Activated B cell treated with CpG ODN at 0.5 μM for 24 hours (primary cell): ENCODE measurements at regions of chr5 and their contacts with region 1.

Region 1: GRCh38 chr5:140540227-140540626 is 7.2 kb upstream of the EIF4EBP3 start:
- DNase-seq: no peak
- ATAC-seq: no peak
- H3K4me3 Mint-ChIP-seq: no peak overlapping the region
- H3K27ac Mint-ChIP-seq: no peak overlapping the region
- H3K4me1 Mint-ChIP-seq: peaks cover 2% of the 10 kb centered on the region
- H3K27me3 Mint-ChIP-seq: no peaks in the 10 kb centered on the region
- CTCF ChIP-seq: no peak

Region 2: DNA sequence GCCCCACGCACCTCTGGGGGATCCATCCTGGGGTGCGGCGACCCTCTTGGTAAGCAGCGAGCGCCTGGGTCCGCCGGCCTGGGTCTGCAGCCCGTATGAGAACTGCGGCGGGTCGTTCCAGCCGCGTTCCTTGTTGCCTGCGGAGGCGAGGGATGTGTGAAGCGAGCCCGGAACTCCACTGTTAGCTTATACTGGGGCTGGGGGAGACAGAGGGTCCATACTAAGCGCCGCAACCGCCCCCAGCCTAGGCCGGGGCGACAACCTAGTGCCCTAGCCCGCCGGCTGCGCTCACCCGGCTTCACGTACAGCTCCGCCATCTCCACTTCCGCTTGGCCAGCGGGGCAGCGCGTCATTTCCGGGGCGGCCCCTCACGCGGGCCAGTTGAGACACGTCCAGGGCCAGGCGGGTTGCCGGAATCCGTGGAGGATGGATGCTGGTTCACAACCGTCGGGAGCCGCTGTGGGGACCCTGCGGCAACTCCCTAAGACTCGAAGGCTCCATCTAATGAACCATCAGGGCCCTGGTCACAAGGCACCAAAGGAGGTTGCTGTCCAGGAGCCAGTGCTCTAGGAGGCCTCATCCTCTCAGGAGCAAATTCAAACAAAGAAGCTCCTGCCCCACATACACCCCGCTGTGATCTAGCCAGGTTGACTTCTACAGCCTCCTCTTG is 17.0 kb after region 1 on chr5 and contains the start of gene SRA1:
- CTCF ChIA-PET with region 1: interaction called, 3 read pairs
- POLR2A ChIA-PET with region 1: interaction called, 10 read pairs
- intact Hi-C with region 1: no loop called
- DNase-seq: peak; percentile 88
- ATAC-seq: peak; percentile 97
- H3K4me3 Mint-ChIP-seq: peak within 1 kb of the TSS; percentile 93
- H3K27ac Mint-ChIP-seq: peak within 1 kb of the TSS; percentile 89
- H3K4me1 Mint-ChIP-seq: peaks cover 55% of the 10 kb centered on the region
- H3K27me3 Mint-ChIP-seq: no peaks in the 10 kb centered on the region
- CTCF ChIP-seq: no peak
- total RNA-seq, gene SRA1: 41.1 and 41.8 TPM in 2 replicates

Region 3: DNA sequence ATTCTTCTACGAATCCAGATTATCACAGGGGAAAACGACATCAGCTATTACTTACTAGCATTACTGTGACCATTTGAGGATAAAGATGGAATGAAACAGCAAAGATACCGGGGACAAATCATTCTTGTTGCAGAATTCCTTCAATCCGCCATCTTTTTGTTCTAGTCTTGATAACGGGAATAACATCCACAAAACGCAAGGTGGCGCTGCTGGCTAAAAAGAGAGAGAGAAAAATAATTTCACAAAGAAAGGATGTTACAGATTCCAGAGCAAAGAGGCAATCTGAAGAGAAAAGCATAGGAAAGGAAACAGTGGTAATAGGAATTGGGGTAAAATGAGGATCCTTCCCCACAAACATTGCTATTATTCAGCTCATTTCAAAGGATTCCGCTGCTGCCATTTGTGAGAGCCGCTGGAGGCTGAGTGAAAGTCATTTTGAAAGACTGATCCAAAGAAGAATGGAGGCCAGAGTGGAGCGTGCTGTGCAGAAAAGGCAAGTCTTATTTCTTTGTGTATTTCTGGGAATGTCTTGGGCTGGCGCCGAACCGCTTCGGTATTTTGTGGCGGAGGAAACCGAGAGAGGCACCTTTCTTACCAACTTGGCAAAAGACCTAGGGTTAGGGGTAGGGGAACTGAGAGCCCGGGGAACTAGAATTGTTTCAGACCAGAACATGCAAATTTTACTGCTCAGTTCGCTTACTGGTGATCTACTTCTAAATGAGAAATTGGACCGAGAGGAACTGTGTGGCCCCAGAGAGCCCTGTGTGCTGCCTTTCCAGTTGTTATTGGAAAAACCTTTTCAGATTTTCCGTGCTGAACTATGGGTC is 632.4 kb after region 1 on chr5 and contains the start of gene PCDHB7:
- CTCF ChIA-PET with region 1: no interaction called
- POLR2A ChIA-PET with region 1: no interaction called
- intact Hi-C with region 1: no loop called
- DNase-seq: no peak
- ATAC-seq: no peak
- H3K4me3 Mint-ChIP-seq: no peak within 1 kb of the TSS
- H3K27ac Mint-ChIP-seq: no peak within 1 kb of the TSS
- H3K4me1 Mint-ChIP-seq: peaks cover 5% of the 10 kb centered on the region
- H3K27me3 Mint-ChIP-seq: peaks cover 13% of the 10 kb centered on the region
- CTCF ChIP-seq: no peak
- total RNA-seq, gene PCDHB7: not detected in 2 replicates